Activated T-helper 1 cell treated with anti-CD3 and anti-CD28 coated beads, Interleukin-12 subunit alpha, Interleukin-12 subunit beta, Interleukin-2, Interleukin-4 antibody, amounts not matched to agents 30 ng/mL and 10 ng/mL and 1 ng/mL, durations not matched to agents 14 hours and 24 hours and 36 hours (primary cell): ENCODE measurements at regions of chr5 and their contacts with region 1.

Region 1: DNA sequence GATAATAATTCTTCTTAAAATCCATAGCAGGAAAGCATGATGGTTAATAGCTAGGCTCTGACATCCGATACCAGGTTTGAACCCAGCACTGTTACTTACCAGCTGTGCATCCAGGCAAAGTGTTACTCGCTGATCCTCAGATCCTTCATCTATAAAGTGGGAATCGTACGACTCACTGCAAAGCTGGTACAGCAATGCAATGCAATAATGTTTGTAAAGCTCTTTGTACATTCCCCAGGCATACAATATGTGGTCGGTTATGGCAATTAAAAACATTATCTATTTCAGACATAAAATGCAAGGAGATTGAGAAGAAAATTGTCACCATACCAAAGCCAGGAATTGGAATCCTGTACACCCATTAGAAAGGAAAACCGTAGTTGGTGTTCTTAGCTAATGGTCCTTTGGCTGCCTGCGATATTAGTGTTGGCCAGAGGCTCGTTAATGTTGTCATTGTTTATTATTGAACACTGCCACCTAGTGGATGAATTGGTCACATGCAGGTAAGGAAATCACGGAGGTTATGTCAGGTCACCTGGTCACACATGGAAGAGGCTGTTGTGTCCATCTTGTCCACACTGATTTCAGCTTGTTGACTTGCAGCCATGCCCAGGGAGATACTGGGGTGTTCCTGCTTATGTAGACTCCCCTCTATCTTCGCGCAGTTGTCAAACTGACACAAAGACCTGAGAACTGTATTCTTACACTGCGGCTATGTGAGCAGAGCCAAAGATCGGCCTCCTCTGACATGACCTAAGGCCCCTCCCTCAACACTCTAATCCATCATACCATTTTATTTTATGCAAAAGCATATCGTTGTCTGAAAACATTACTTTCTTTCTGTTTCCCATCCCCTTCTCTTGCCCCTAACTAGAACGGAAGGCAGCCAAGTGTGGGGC is 87.5 kb upstream of the PPP2R2B start:
- DNase-seq: peak; percentile 29
- H3K4me3 Mint-ChIP-seq: no peak overlapping the region
- H3K27ac Mint-ChIP-seq: no peak overlapping the region
- H3K4me1 Mint-ChIP-seq: no peaks in the 10 kb centered on the region
- H3K27me3 Mint-ChIP-seq: no peaks in the 10 kb centered on the region

Region 2: DNA sequence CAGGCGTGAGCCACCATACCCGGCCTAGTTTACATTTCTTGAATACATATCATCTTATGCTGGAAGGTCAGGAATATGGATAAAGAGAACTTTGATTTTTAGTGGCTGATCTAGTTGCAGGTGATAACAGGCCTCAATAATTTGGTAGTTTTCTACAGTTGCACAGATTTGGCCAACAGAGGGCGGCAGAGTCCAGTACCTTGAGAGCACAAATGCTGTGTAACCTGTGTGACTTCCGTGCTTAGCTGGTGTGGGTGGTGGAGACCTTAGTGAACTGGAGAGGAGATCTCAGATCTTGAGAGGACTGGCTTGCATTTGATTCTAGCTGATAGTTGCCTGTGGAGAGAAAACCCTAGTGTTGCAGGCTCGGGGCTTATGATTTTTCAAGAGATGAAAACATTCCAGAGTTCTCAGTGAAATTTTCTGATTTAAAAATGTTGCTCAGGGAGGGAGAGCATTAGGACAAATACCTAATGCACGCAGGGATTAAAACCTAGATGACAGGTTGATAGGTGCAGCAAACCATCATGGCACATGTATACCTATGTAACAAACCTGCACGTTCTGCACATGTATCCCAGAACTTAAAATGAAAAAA is 432.7 kb before region 1 on chr5:
- intact Hi-C with region 1: loop called (anchors 1 kb)
- DNase-seq: peak; percentile 58
- H3K4me3 Mint-ChIP-seq: no peak overlapping the region
- H3K27ac Mint-ChIP-seq: no peak overlapping the region
- H3K4me1 Mint-ChIP-seq: peaks cover 16% of the 10 kb centered on the region
- H3K27me3 Mint-ChIP-seq: peaks cover 3% of the 10 kb centered on the region

Region 3: DNA sequence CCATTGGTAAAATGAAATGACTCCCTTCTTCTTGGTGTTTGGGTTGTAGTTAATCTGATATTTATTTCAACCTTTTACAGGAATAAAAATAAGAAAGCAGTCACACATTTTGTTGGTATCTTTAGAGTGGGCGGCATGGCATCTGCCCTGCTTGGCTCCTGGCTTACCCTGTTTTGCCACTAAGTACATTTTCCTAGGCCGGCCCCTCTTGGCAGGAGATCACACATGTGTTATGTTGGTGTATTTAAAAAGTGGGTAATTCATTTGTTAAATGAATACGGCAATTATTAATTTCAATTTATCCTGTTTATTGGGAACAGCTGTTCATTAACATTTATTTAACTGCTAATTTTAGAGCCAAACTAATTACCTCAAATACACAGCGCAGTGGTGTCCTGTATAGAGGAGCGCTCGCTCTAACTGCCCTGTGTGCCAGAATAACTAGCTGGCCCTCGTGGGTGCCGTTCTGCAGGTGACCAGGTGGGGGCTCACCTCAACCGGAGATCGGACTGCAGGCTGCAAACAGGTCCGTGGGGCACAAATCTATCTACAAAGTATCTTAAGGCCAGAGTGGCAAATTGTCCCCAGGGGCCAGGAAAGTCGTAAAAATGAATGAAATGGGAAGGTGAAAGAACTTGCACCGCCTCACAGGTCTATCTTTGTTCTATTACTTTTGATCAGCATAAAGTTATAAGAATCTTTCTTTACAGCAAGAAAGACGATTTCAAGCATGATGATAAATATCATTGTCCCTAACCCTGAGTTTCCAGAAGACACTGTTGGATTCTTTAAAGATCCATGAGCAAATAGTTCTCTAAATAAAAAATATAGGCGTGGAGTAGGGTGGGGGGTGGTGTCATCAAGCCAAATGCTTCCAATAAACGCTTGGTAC is 423.8 kb before region 1 on chr5:
- intact Hi-C with region 1: loop called (anchors 1 kb)
- DNase-seq: peak; percentile 38
- H3K4me3 Mint-ChIP-seq: no peak overlapping the region
- H3K27ac Mint-ChIP-seq: no peak overlapping the region
- H3K4me1 Mint-ChIP-seq: no peaks in the 10 kb centered on the region
- H3K27me3 Mint-ChIP-seq: peaks cover 7% of the 10 kb centered on the region

Region 4: DNA sequence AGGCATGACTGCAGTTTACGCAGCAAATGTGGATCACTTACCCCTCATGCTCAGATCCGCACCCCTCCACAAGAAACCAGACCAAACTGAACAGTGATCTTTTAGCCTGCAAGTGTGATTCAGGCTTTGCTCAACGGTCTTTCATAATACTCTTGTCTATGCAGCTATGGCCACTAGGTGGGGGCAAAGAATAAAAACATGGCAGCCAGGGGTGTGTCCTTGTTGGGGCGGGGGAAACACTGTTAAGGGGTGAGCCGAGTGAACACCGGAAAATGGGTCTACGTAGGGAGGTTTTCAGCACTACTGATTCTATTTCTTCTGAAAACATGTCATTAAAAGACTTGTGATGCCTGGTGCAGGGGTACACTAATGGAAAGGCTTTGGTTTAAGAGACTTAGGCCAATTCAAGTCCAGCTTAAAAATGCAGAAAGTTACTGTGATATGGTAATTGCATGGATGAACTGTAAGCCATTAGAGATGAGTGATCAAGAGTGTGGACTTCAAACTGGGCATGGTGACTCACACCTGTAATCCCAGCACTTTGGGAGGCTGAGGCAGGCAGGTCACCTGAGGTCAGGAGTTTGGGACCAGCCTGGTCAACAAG is 400.1 kb before region 1 on chr5:
- intact Hi-C with region 1: loop called (anchors 1 kb)
- DNase-seq: peak; percentile 23
- H3K4me3 Mint-ChIP-seq: no peak overlapping the region
- H3K27ac Mint-ChIP-seq: no peak overlapping the region
- H3K4me1 Mint-ChIP-seq: no peaks in the 10 kb centered on the region
- H3K27me3 Mint-ChIP-seq: peaks cover 3% of the 10 kb centered on the region

Region 5: DNA sequence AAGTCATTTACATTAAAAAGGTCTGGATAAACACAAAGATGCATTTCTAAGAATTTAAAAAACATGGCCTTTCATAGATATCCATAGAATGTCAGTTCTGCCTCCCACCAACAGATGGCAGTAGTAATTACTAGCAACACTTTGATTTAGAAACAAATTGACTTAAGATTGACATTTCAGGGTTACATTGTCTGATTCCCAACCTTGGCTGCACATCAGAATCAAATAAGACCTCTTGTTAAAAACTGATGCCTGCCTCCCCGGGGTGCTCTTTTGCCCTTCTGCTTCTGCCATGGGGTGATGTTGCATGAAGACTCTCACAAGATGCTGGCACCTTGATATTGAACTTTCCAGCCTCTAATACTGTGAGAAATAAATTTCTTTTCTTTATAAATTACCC is 303.8 kb before region 1 on chr5:
- intact Hi-C with region 1: loop called (anchors 1 kb)
- DNase-seq: no peak
- H3K4me3 Mint-ChIP-seq: no peak overlapping the region
- H3K27ac Mint-ChIP-seq: no peak overlapping the region
- H3K4me1 Mint-ChIP-seq: no peaks in the 10 kb centered on the region
- H3K27me3 Mint-ChIP-seq: no peaks in the 10 kb centered on the region

Region 6: GRCh38 chr5:147188200-147189108 is 222.4 kb after region 1 on chr5:
- intact Hi-C with region 1: loop called (anchors 10 kb)
- DNase-seq: peak; percentile 20
- H3K4me3 Mint-ChIP-seq: no peak overlapping the region
- H3K27ac Mint-ChIP-seq: no peak overlapping the region
- H3K4me1 Mint-ChIP-seq: peaks cover 5% of the 10 kb centered on the region
- H3K27me3 Mint-ChIP-seq: no peaks in the 10 kb centered on the region